ENCODE measurements at regions of chr7 and their contacts with region 1.

Region 1: GRCh38 chr7:65373608-65374351 is at the start of gene ZNF92:
- DNase-seq: peak; percentile 93 to 97 (median 94)
- H3K4me3 ChIP-seq: peak within 1 kb of the TSS; percentile 93 to 97
- H3K4me3 Mint-ChIP-seq: peak within 1 kb of the TSS; percentile 91 to 99 (median 97)
- H3K27ac ChIP-seq: peak within 1 kb of the TSS; percentile 83
- H3K27ac Mint-ChIP-seq: peak within 1 kb of the TSS; percentile 90 to 97 (median 93)
- H3K4me1 ChIP-seq: peaks cover 37% of the 10 kb centered on the region
- H3K4me1 Mint-ChIP-seq: peaks cover 34 to 59% (median 45%) of the 10 kb centered on the region in 4 donors
- H3K27me3 ChIP-seq: no peaks in the 10 kb centered on the region
- H3K27me3 Mint-ChIP-seq: no peaks in the 10 kb centered on the region
- total RNA-seq, gene ZNF92: 31.1 to 35.3 TPM

Region 2: GRCh38 chr7:64307254-64308015 is 1066.3 kb before region 1 on chr7:
- CTCF ChIA-PET with region 1: no interaction called
- POLR2A ChIA-PET with region 1: no interaction called
- intact Hi-C with region 1: loop called (anchors 1 kb)
- DNase-seq: peak; percentile 91 to 97 (median 94)
- H3K4me3 ChIP-seq: peak overlapping the region; percentile 95 to 97
- H3K4me3 Mint-ChIP-seq: peak overlapping the region; percentile 92 to 100 (median 96)
- H3K27ac ChIP-seq: peak overlapping the region; percentile 71
- H3K27ac Mint-ChIP-seq: peak overlapping the region; percentile 94 to 99 (median 97)
- H3K4me1 ChIP-seq: peaks cover 13% of the 10 kb centered on the region
- H3K4me1 Mint-ChIP-seq: peaks cover 10 to 29% (median 16%) of the 10 kb centered on the region in 4 donors
- H3K27me3 ChIP-seq: no peaks in the 10 kb centered on the region
- H3K27me3 Mint-ChIP-seq: no peaks in the 10 kb centered on the region

Region 3: GRCh38 chr7:64665980-64666662 is 707.7 kb before region 1 on chr7 and contains the start of gene ZNF107:
- CTCF ChIA-PET with region 1: no interaction called
- POLR2A ChIA-PET with region 1: interaction called, 3 read pairs
- intact Hi-C with region 1: loop called (anchors 10 kb)
- DNase-seq: peak; percentile 86 to 92 (median 88)
- H3K4me3 ChIP-seq: peak within 1 kb of the TSS; percentile 85 to 90
- H3K4me3 Mint-ChIP-seq: peak within 1 kb of the TSS; percentile 97 to 98 (median 97)
- H3K27ac ChIP-seq: peak within 1 kb of the TSS; percentile 92
- H3K27ac Mint-ChIP-seq: peak within 1 kb of the TSS; percentile 97 to 99 (median 98)
- H3K4me1 ChIP-seq: peaks cover 38% of the 10 kb centered on the region
- H3K4me1 Mint-ChIP-seq: peaks cover 42 to 80% (median 59%) of the 10 kb centered on the region in 4 donors
- H3K27me3 ChIP-seq: no peaks in the 10 kb centered on the region
- H3K27me3 Mint-ChIP-seq: no peaks in the 10 kb centered on the region
- total RNA-seq, gene ZNF107: 30.2 to 30.9 TPM

Region 4: DNA sequence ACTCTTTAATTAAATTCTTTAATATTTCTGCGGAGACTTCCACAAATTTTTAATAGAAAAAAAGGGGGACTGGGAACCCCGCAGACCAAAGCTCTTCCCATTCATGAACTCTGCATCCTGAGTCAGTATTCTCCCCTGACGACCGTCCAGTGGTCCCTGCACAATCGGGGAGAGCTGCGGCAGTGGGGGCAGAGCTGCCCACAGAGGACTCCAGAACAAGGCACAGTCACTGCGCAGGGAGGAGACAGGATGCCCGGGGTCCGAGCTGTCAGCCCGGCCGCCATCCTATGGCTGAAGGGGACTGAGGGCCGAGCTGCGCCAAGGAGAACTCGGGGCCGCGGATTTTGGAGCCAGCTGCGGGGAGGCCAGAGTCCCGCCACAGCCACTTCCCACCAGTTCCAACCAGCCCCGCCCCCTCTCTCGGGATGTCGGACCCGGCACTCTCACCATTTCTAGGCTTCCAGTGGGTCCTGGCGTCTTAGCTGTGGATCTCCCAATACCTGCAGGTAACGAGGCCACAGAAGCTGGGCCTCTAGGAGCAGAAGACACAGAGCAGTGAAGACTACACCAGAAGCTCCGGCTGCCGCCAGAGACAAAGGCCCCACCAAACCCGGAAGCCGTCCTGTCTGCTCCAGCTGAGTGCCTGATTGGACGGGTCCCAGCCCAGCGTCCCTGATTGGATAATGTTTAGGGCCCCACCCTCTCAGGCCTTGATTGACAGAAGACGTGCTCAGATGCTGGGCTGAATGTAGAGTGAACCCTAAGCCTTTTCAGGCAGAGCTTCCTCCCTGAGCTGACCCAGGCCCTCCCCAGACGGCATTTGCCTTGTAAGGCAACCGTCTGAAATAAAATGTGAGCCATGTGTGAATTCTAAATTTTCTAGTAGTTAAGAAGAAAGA is 367.4 kb before region 1 on chr7 and contains the start of gene ERV3-1:
- CTCF ChIA-PET with region 1: no interaction called
- POLR2A ChIA-PET with region 1: interaction called, 10 read pairs
- intact Hi-C with region 1: loop called (anchors 1 kb)
- DNase-seq: peak; percentile 91 to 98 (median 93)
- H3K4me3 ChIP-seq: peak within 1 kb of the TSS; percentile 79 to 95
- H3K4me3 Mint-ChIP-seq: peak within 1 kb of the TSS; percentile 93 to 97 (median 96)
- H3K27ac ChIP-seq: peak within 1 kb of the TSS; percentile 84
- H3K27ac Mint-ChIP-seq: peak within 1 kb of the TSS; percentile 90 to 98 (median 97)
- H3K4me1 ChIP-seq: peaks cover 30% of the 10 kb centered on the region
- H3K4me1 Mint-ChIP-seq: peaks cover 29 to 52% (median 42%) of the 10 kb centered on the region in 4 donors
- H3K27me3 ChIP-seq: no peaks in the 10 kb centered on the region
- H3K27me3 Mint-ChIP-seq: no peaks in the 10 kb centered on the region
- total RNA-seq, gene ERV3-1: 18.4 to 19.9 TPM

Region 5: DNA sequence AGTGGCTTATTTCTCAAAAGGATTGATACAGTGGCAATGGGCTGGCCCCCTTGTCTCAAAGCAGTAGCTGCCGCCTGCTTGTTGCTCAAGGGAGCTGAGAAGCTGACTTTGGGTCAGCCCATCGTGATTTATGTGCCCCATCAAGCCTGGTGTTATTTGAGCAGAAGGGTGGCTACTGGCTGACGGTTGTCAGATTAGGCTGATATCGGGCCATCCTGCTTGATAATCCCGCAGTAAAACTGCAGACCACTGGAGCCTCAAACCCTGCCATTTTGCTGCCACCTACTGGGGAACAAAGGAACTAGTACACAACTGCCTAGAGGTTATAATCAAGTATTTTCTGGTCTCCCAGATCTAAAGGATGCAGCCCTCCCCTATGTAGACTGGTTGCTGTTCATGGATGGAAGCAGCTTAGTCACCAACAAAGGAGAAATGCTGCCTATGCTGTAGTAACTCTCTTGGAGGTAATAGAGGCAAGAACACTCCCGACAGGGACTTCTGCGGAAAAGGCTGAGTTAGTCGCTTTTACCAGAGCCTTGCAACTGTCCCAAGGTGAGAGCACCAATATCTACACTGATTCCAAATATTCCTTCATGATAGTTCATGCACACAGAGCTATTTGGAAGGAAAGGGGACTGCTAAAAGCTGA is 66.0 kb before region 1 on chr7:
- CTCF ChIA-PET with region 1: interaction called, 11 read pairs
- POLR2A ChIA-PET with region 1: interaction called, 3 read pairs
- intact Hi-C with region 1: no loop called
- DNase-seq: peak; percentile 39 to 47 (median 42)
- H3K4me3 ChIP-seq: no peak overlapping the region
- H3K4me3 Mint-ChIP-seq: no peak overlapping the region
- H3K27ac ChIP-seq: no peak overlapping the region
- H3K27ac Mint-ChIP-seq: no peak overlapping the region
- H3K4me1 ChIP-seq: no peaks in the 10 kb centered on the region
- H3K4me1 Mint-ChIP-seq: peaks cover 0 to 3% (median 1%) of the 10 kb centered on the region in 4 donors
- H3K27me3 ChIP-seq: no peaks in the 10 kb centered on the region
- H3K27me3 Mint-ChIP-seq: peaks cover 3 to 5% of the 10 kb centered on the region in 2 donors

Region 6: GRCh38 chr7:65509368-65510186 is 135.8 kb after region 1 on chr7:
- CTCF ChIA-PET with region 1: no interaction called
- POLR2A ChIA-PET with region 1: interaction called, 9 read pairs
- intact Hi-C with region 1: loop called (anchors 10 kb)
- DNase-seq: peak in 4 of 5 donors; percentile 5 to 35 (median 17)
- H3K4me3 ChIP-seq: peak overlapping the region in 1 of 2 donors; percentile 28
- H3K4me3 Mint-ChIP-seq: peak overlapping the region; percentile 53 to 84 (median 81)
- H3K27ac ChIP-seq: no peak overlapping the region
- H3K27ac Mint-ChIP-seq: peak overlapping the region in 4 of 7 donors; percentile 30 to 54 (median 50)
- H3K4me1 ChIP-seq: peaks cover 5% of the 10 kb centered on the region
- H3K4me1 Mint-ChIP-seq: peaks cover 4 to 7% (median 6%) of the 10 kb centered on the region in 4 donors
- H3K27me3 ChIP-seq: peaks cover 6% of the 10 kb centered on the region
- H3K27me3 Mint-ChIP-seq: peaks cover 15 to 16% of the 10 kb centered on the region in 2 donors